ENCODE measurements at regions of chr17 and their contacts with region 1.

Region 1: DNA sequence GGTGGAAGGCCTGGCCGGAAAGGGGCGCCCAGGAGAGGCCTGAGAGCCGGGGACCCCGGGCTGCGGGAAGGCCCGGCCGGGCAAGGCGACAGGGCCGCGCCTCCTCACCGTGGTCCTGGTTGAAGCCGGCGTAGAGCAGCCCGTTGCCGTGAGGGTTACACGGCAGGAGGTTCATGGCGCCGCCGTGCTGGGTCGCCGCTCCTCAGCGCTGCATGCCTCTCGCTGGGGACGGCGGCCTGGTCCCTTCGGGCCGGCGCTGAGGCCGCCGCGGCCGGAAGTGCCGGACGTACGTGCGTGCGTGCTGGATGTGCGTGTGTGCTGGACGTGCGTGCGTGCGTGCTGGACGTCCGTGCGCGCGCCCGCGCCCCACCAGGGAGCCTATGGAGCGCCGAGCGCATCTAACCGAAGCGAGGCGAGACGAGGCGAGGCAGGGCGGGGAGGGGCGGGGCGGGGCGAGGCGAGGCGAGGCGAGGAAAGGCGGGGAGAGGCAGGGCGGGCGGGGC is at the start of gene WDR45B:
- DNase-seq: peak; percentile 96 to 98 (median 97)
- ATAC-seq: peak; percentile 95 to 98 (median 97)
- H3K4me3 ChIP-seq: peak within 1 kb of the TSS; percentile 76 to 100 (median 98)
- H3K27ac ChIP-seq: peak within 1 kb of the TSS; percentile 87 to 99 (median 96)
- H3K4me1 ChIP-seq: peaks cover 0 to 40% (median 20%) of the 10 kb centered on the region in 12 donors
- H3K27me3 ChIP-seq: no peaks in the 10 kb centered on the region
- CTCF ChIP-seq: no peak
- POLR2A ChIP-seq: peak; percentile 61 to 95
- total RNA-seq, gene WDR45B: 33.9 to 48.2 (median 40.1) TPM

Region 2: DNA sequence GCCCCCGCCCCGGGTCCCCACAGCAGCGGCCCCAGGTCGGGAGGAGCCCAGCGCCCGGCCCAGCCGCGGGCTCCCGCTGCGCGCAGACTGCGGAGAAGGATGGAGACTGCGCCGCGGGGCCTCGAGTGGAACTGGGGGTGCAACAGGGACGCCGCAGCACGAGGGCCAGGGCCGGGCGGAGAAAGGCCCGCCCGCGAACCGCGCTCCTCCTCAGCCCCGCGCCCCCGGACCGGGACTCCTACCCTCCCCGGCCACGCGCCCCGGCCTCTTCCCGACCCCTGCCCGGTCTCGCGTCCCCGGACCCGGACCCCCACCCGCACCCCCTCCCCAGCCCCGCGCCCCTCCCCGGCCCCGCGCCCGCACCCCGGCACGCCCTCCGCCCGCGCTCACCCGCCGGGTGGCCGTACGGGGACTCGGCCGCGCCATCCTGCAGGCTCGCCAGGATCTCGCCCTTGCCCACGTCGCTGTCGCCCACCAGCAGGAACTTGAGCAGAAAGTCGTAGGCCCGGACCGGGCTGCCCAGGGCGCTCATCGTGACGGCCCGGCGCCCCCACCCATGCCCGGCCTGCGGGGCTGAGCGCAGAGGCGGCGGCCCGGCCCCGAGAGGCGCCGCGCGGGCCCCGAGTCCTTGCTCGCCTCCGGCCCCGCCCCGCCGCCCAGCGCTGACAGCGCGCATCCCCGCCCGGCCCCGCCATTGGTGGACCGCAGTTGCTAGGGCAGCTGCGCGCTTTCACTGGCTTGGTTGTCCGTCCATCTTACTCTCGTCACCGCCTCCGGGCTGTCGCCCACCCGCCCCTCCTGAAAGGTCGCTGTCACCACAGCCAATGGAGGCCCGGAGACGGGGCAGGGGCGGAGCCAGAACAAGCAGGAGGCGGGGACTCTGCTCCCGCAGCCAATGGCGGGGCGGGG is 50.1 kb after region 1 on chr17 and contains the start of gene RAB40B:
- intact Hi-C with region 1: loop called in 3 of 10 experiments (anchors 1 to 5 kb)
- DNase-seq: peak; percentile 99 to 100 (median 100)
- ATAC-seq: peak; percentile 99 to 100 (median 100)
- H3K4me3 ChIP-seq: peak within 1 kb of the TSS; percentile 65 to 98 (median 80)
- H3K27ac ChIP-seq: peak within 1 kb of the TSS in 10 of 12 donors; percentile 46 to 85 (median 68)
- H3K4me1 ChIP-seq: peaks cover 0 to 22% (median 15%) of the 10 kb centered on the region in 12 donors
- H3K27me3 ChIP-seq: peaks cover 0 to 6% (median 0%) of the 10 kb centered on the region in 9 donors
- CTCF ChIP-seq: no peak
- POLR2A ChIP-seq: peak; percentile 42 to 65
- total RNA-seq, gene RAB40B: 15.2 to 37.7 (median 23.7) TPM

Region 3: GRCh38 chr17:82751571-82752370 is 103.6 kb after region 1 on chr17 and contains the start of gene TBCD:
- intact Hi-C with region 1: loop called in 1 of 10 experiments (anchors 5 kb)
- DNase-seq: peak; percentile 89 to 94 (median 91)
- ATAC-seq: peak; percentile 59 to 91 (median 88)
- H3K4me3 ChIP-seq: peak within 1 kb of the TSS; percentile 70 to 100 (median 82)
- H3K27ac ChIP-seq: peak within 1 kb of the TSS; percentile 33 to 95 (median 82)
- H3K4me1 ChIP-seq: peaks cover 6 to 19% (median 12%) of the 10 kb centered on the region in 12 donors
- H3K27me3 ChIP-seq: no peaks in the 10 kb centered on the region
- CTCF ChIP-seq: no peak
- POLR2A ChIP-seq: peak in 1 of 2 donors; percentile 56
- total RNA-seq, gene TBCD: 36.9 to 98.4 (median 54.9) TPM